ENCODE measurements at regions of chr3 and their contacts with region 1.

Region 1: DNA sequence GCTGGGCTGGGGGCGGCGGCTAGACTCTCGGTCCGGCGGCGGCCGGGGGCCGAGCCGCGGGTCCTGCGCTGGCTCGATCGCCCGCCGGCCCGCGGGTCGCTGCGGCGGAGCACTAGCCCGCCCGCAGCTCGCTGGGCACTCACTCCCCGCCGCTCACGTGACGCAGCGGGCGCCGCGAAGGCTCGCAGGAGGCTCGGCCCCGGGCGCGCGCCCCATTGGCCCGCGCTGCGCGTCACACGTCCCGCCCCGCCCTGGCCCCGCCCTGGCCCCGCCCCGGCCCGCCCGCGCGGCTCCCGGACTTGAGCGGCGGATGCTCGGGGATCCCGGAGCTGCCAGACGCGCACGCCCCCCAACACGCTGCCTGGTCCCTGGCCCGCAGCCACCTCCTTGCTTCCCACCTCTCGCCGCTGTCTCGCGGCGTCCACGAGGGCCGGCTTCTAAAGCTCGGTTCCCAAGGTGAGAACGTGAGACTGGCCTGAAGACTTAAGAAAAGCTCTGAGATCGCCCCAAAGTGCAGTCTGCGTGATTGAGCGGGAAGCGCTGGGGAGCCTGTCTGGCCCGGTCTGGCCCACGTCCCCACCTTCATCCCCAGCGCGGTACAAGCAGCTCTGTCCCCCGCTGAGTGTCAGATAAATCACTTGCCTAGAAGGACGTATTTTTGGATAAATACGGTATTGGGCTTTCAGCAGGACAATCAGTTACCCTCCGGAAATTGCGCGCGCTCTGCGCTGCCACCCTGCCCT is at the start of gene KLF15:
- DNase-seq: peak; percentile 38 to 95
- H3K4me3 ChIP-seq: peak within 1 kb of the TSS; percentile 91 to 97
- H3K27ac ChIP-seq: peak within 1 kb of the TSS; percentile 98 to 99
- H3K4me1 ChIP-seq: peaks cover 8 to 35% of the 10 kb centered on the region in 2 donors
- H3K27me3 ChIP-seq: no peaks in the 10 kb centered on the region
- CTCF ChIP-seq: no peak
- total RNA-seq, gene KLF15: 74.0 TPM

Region 2: GRCh38 chr3:126180477-126181397 is 176.7 kb before region 1 on chr3 and contains the start of gene ALDH1L1:
- intact Hi-C with region 1: loop called (anchors 5 kb)
- DNase-seq: peak; percentile 73 to 96
- H3K4me3 ChIP-seq: peak within 1 kb of the TSS; percentile 74 to 90
- H3K27ac ChIP-seq: peak within 1 kb of the TSS; percentile 98 to 99
- H3K4me1 ChIP-seq: peaks cover 10 to 15% of the 10 kb centered on the region in 2 donors
- H3K27me3 ChIP-seq: no peaks in the 10 kb centered on the region
- CTCF ChIP-seq: no peak
- total RNA-seq, gene ALDH1L1: 36.1 TPM

Region 3: GRCh38 chr3:126259411-126260391 is 97.8 kb before region 1 on chr3:
- intact Hi-C with region 1: loop called (anchors 1 kb)
- DNase-seq: peak; percentile 36 to 91
- H3K4me3 ChIP-seq: peak overlapping the region in 1 of 2 donors; percentile 40
- H3K27ac ChIP-seq: peak overlapping the region; percentile 55 to 72
- H3K4me1 ChIP-seq: peaks cover 4 to 11% of the 10 kb centered on the region in 2 donors
- H3K27me3 ChIP-seq: no peaks in the 10 kb centered on the region
- CTCF ChIP-seq: peak; percentile 84 to 85 (median 85)

Region 4: GRCh38 chr3:126287536-126288241 is 69.8 kb before region 1 on chr3:
- intact Hi-C with region 1: loop called (anchors 1 kb)
- DNase-seq: peak in 1 of 2 donors; percentile 88
- H3K4me3 ChIP-seq: peak overlapping the region; percentile 42 to 65
- H3K27ac ChIP-seq: peak overlapping the region; percentile 87 to 93
- H3K4me1 ChIP-seq: peaks cover 0 to 20% of the 10 kb centered on the region in 2 donors
- H3K27me3 ChIP-seq: no peaks in the 10 kb centered on the region
- CTCF ChIP-seq: peak in 1 of 3 experiments; percentile 7

Region 5: GRCh38 chr3:126389112-126389793 is 31.8 kb after region 1 on chr3:
- intact Hi-C with region 1: loop called (anchors 1 kb)
- DNase-seq: peak; percentile 82 to 98
- H3K4me3 ChIP-seq: peak overlapping the region; percentile 39 to 61
- H3K27ac ChIP-seq: peak overlapping the region; percentile 90 to 93
- H3K4me1 ChIP-seq: peaks cover 4 to 6% of the 10 kb centered on the region in 2 donors
- H3K27me3 ChIP-seq: no peaks in the 10 kb centered on the region
- CTCF ChIP-seq: peak; percentile 96 to 99 (median 97)

Measured in ascending aorta (tissue), 2 donors.